ENCODE measurements at regions of chr3 and their contacts with region 1.

Region 1: GRCh38 chr3:33144433-33144832 is 30.6 kb downstream of the CRTAP start:
- DNase-seq: peak in 5 of 9 experiments; percentile 7 to 44 (median 26)
- ATAC-seq: no peak
- H3K4me3 ChIP-seq: no peak overlapping the region
- H3K4me3 Mint-ChIP-seq: no peak overlapping the region
- H3K27ac ChIP-seq: no peak overlapping the region
- H3K27ac Mint-ChIP-seq: no peak overlapping the region
- H3K4me1 ChIP-seq: no peaks in the 10 kb centered on the region
- H3K4me1 Mint-ChIP-seq: no peaks in the 10 kb centered on the region
- H3K27me3 ChIP-seq: no peaks in the 10 kb centered on the region
- H3K27me3 Mint-ChIP-seq: no peaks in the 10 kb centered on the region
- CTCF ChIP-seq: peak; percentile 17

Region 2: GRCh38 chr3:33131331-33132018 is 13.0 kb before region 1 on chr3:
- CTCF ChIA-PET with region 1: interaction called, 29 read pairs
- POLR2A ChIA-PET with region 1: interaction called, 3 read pairs
- intact Hi-C with region 1: no loop called
- DNase-seq: peak in 4 of 9 experiments; percentile 21 to 61 (median 40)
- ATAC-seq: peak; percentile 69
- H3K4me3 ChIP-seq: no peak overlapping the region
- H3K4me3 Mint-ChIP-seq: no peak overlapping the region
- H3K27ac ChIP-seq: no peak overlapping the region
- H3K27ac Mint-ChIP-seq: no peak overlapping the region
- H3K4me1 ChIP-seq: no peaks in the 10 kb centered on the region
- H3K4me1 Mint-ChIP-seq: peaks cover 3% of the 10 kb centered on the region
- H3K27me3 ChIP-seq: no peaks in the 10 kb centered on the region
- H3K27me3 Mint-ChIP-seq: no peaks in the 10 kb centered on the region
- CTCF ChIP-seq: peak; percentile 84

Region 3: GRCh38 chr3:33456756-33457155 is 312.3 kb after region 1 on chr3:
- CTCF ChIA-PET with region 1: no interaction called
- POLR2A ChIA-PET with region 1: no interaction called
- intact Hi-C with region 1: no loop called
- DNase-seq: no peak
- ATAC-seq: no peak
- H3K4me3 ChIP-seq: no peak overlapping the region
- H3K4me3 Mint-ChIP-seq: no peak overlapping the region
- H3K27ac ChIP-seq: no peak overlapping the region
- H3K27ac Mint-ChIP-seq: no peak overlapping the region
- H3K4me1 ChIP-seq: no peaks in the 10 kb centered on the region
- H3K4me1 Mint-ChIP-seq: peaks cover 3% of the 10 kb centered on the region
- H3K27me3 ChIP-seq: no peaks in the 10 kb centered on the region
- H3K27me3 Mint-ChIP-seq: no peaks in the 10 kb centered on the region
- CTCF ChIP-seq: no peak

Measured in CD8-positive, alpha-beta T cell (primary cell).